Natural killer cell (primary cell): ENCODE measurements at regions of chr16 and their contacts with region 1.

Region 1: GRCh38 chr16:3027945-3028712 is 4.3 kb downstream of the THOC6 start:
- DNase-seq: peak; percentile 74 to 94
- ATAC-seq: peak; percentile 39 to 63 (median 51)
- H3K4me3 ChIP-seq: no peak overlapping the region
- H3K4me3 Mint-ChIP-seq: no peak overlapping the region
- H3K27ac ChIP-seq: no peak overlapping the region
- H3K27ac Mint-ChIP-seq: no peak overlapping the region
- H3K4me1 ChIP-seq: peaks cover 41% of the 10 kb centered on the region
- H3K4me1 Mint-ChIP-seq: peaks cover 17 to 46% of the 10 kb centered on the region in 2 donors
- H3K27me3 ChIP-seq: peaks cover 23% of the 10 kb centered on the region
- H3K27me3 Mint-ChIP-seq: peaks cover 16 to 33% of the 10 kb centered on the region in 2 donors
- CTCF ChIP-seq: peak; percentile 72

Region 2: DNA sequence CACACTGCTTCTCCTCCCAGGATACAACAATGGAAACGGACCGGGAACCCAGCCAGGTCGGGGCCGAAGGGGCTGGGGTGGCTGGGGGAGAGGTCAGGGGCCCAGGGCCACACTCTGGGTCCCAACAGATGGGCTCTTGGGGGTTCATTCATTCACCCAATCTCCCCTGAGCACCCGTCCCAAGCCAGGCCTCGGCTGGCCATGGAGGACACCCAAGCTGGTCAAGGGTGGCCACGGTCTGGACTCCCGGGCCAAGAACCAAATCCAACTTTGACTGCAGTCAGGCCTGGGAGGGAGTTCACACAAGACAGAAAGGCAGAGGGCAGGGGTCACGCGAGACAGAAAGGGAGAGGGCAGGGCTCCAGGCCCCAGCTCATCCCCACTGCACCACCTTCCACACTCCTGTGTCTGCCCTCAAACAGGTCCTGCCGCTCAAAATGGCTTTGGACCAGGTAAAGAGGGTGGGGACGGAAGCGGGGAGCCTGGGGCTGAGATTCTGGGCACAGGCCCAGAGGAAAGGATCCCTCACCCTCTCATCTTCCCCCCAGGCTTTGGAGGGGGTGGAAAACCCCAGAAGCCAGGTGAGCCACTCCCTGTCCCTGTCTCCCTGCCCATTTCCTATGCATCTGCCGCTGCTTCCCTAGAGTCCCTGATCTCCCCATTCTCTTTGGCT is 35.6 kb before region 1 on chr16:
- intact Hi-C with region 1: no loop called
- DNase-seq: no peak
- ATAC-seq: no peak
- H3K4me3 ChIP-seq: no peak overlapping the region
- H3K4me3 Mint-ChIP-seq: no peak overlapping the region
- H3K27ac ChIP-seq: no peak overlapping the region
- H3K27ac Mint-ChIP-seq: no peak overlapping the region
- H3K4me1 ChIP-seq: no peaks in the 10 kb centered on the region
- H3K4me1 Mint-ChIP-seq: no peaks in the 10 kb centered on the region
- H3K27me3 ChIP-seq: no peaks in the 10 kb centered on the region
- H3K27me3 Mint-ChIP-seq: no peaks in the 10 kb centered on the region
- CTCF ChIP-seq: no peak

Region 3: DNA sequence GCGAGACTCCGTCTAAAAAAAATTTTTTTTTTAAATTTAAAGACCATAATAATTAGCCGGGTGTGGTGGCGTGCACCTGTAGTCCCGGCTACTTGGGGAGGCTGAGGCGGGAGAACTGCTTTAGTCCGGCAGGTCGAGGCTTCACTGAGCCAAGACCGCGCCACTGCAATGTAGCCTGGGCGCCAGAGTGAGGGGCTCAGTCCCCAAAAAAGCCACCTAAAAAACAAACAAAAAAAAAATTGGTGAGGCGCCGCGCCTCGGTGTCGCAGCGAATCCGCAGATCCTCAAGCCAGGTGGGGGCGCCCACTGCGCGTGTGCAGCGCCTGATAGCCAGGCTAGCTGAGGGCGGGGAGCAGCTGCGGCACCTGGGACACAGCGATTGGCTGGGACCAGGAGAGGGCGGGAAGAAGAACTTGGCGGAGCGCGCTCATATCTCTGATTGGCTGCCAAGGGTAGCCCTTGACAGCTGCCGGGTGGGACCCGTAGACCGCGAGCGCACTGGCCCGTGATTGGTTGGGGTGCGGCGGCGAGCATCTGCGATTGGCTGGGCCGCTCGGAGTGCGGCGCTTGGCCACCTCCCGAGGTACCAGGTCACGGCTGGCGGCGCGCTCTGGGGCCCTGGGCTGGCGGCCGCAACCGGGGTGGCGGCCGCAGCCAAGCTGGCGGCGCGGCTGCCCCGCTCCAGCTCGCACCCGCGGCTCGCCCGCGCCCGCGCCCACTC is 24.4 kb before region 1 on chr16:
- intact Hi-C with region 1: loop called (anchors 2 kb)
- DNase-seq: peak; percentile 90 to 99
- ATAC-seq: peak; percentile 96 to 99 (median 97)
- H3K4me3 ChIP-seq: no peak overlapping the region
- H3K4me3 Mint-ChIP-seq: peak overlapping the region; percentile 87
- H3K27ac ChIP-seq: no peak overlapping the region
- H3K27ac Mint-ChIP-seq: peak overlapping the region in 1 of 2 donors; percentile 80
- H3K4me1 ChIP-seq: peaks cover 30% of the 10 kb centered on the region
- H3K4me1 Mint-ChIP-seq: peaks cover 5 to 24% of the 10 kb centered on the region in 2 donors
- H3K27me3 ChIP-seq: no peaks in the 10 kb centered on the region
- H3K27me3 Mint-ChIP-seq: peaks cover 0 to 3% of the 10 kb centered on the region in 2 donors
- CTCF ChIP-seq: peak; percentile 12